Ovary (tissue), 10 donors: ENCODE measurements at regions of chr4 and their contacts with region 1.

Region 1: GRCh38 chr4:186587416-186588018 is 32.1 kb upstream of the MTNR1A start:
- DNase-seq: peak; percentile 51 to 77 (median 69)
- H3K4me3 ChIP-seq: no peak overlapping the region
- H3K27ac ChIP-seq: no peak overlapping the region
- H3K4me1 ChIP-seq: peaks cover 2% of the 10 kb centered on the region
- H3K27me3 ChIP-seq: no peaks in the 10 kb centered on the region
- CTCF ChIP-seq: peak; percentile 36 to 63 (median 59)
- EP300 ChIP-seq: no peak
- POLR2A ChIP-seq: no peak

Region 2: DNA sequence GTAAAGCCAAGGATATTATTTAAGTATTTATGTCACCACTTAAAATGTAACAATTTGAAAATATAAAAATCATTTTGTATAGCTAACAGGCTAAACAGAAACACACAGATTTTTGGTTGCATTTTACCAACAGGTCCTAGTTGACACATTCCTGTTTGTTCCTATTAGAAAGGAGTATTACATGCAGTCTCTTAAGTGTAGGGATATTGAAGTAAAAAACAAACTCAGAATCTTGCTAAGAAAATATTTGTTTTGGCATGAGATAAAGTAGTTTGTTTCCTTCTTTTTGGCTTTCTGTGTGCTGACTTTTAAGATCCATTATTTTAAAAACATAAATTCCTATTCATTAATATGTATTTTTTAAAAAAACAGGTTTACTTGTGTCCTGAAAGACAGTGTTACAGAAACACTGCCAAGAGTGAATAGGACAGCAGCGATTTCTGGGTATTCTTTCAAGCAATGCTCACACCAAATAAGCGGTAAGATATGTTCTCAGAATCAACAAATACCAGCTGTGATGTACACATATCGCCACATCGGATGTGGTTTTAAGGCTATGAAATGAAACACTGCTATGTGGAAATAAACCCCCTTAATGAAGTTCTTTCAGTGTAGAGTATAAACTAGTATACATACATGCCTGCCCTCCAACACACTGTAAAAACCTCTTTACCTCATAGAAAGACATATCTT is 314.7 kb before region 1 on chr4:
- intact Hi-C with region 1: no loop called
- DNase-seq: no peak
- H3K4me3 ChIP-seq: no peak overlapping the region
- H3K27ac ChIP-seq: no peak overlapping the region
- H3K4me1 ChIP-seq: no peaks in the 10 kb centered on the region
- H3K27me3 ChIP-seq: no peaks in the 10 kb centered on the region
- CTCF ChIP-seq: no peak
- EP300 ChIP-seq: no peak
- POLR2A ChIP-seq: no peak

Region 3: GRCh38 chr4:186297013-186297645 is 290.4 kb before region 1 on chr4:
- intact Hi-C with region 1: loop called in 3 of 4 experiments (anchors 5 to 10 kb)
- DNase-seq: no peak
- H3K4me3 ChIP-seq: no peak overlapping the region
- H3K27ac ChIP-seq: no peak overlapping the region
- H3K4me1 ChIP-seq: no peaks in the 10 kb centered on the region
- H3K27me3 ChIP-seq: no peaks in the 10 kb centered on the region
- CTCF ChIP-seq: peak in 2 of 3 donors; percentile 26 to 33
- EP300 ChIP-seq: no peak
- POLR2A ChIP-seq: no peak